ENCODE measurements at regions of chr3 and their contacts with region 1.

Region 1: DNA sequence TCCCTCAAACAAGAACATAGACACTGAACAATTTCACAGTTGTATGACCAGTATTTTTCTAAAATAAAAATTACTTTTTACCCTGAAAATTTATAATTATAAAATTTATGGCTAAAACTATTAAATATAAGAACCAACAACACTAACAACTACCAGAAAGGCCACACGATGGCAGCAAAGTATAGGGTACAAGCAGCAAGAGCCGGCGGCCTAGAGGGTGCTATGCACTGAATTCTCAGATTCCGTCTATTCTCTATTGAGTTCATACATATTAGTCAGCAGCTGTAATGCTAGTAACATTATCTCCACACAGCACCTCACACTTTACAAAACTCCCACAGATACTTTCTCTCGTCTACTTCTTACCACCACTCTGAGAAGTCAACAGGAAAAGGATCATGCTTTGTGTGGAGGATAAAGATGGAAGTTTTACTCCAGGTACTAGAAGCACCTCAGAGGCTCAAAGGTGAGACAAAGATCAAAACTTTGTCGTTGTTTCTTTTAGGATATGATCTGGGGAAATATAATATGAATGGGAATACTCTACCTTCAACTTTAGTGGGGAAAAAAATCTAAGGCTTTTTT is 160.5 kb downstream of the FGF12 start:
- DNase-seq: peak; percentile 86
- H3K4me3 Mint-ChIP-seq: no peak overlapping the region
- H3K27ac Mint-ChIP-seq: no peak overlapping the region
- H3K4me1 Mint-ChIP-seq: peaks cover 5% of the 10 kb centered on the region
- H3K27me3 Mint-ChIP-seq: peaks cover 22% of the 10 kb centered on the region

Region 2: DNA sequence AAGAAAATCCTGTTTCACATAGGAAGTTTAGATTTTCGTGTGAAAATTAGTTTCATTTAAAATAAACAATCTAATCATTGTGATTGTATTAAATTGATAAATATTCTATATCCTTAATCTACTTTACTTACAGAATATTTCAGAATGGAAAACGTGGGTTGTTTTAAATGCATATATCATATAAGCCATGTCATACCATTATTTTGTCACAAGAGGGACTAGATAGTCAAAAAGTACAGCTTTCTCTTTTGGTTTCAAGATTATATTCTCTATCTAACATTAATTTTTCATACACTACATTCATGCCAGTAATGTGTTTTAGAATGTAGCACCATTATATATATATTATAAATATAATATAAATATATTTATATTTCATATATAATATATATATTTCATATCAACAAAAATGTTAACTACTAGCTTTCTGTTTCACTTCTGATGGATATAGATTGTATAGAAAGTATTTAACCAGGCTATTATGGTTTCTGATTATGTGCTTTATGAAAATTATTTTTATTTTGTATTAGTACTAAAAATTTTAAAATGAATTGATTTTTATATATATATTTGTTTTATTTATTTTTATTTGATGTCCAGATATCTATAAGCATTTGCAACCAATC is 1322.4 kb before region 1 on chr3:
- intact Hi-C with region 1: loop called (anchors 5 kb)
- DNase-seq: no peak
- H3K4me3 Mint-ChIP-seq: no peak overlapping the region
- H3K27ac Mint-ChIP-seq: no peak overlapping the region
- H3K4me1 Mint-ChIP-seq: no peaks in the 10 kb centered on the region
- H3K27me3 Mint-ChIP-seq: no peaks in the 10 kb centered on the region

Region 3: GRCh38 chr3:192597533-192598302 is 30.9 kb after region 1 on chr3:
- intact Hi-C with region 1: no loop called
- DNase-seq: no peak
- H3K4me3 Mint-ChIP-seq: no peak overlapping the region
- H3K27ac Mint-ChIP-seq: no peak overlapping the region
- H3K4me1 Mint-ChIP-seq: no peaks in the 10 kb centered on the region
- H3K27me3 Mint-ChIP-seq: no peaks in the 10 kb centered on the region

Region 4: GRCh38 chr3:192802957-192803899 is 236.4 kb after region 1 on chr3:
- intact Hi-C with region 1: loop called (anchors 1 kb)
- DNase-seq: no peak
- H3K4me3 Mint-ChIP-seq: no peak overlapping the region
- H3K27ac Mint-ChIP-seq: no peak overlapping the region
- H3K4me1 Mint-ChIP-seq: peaks cover 6% of the 10 kb centered on the region
- H3K27me3 Mint-ChIP-seq: no peaks in the 10 kb centered on the region

Region 5: GRCh38 chr3:193040836-193041672 is 474.3 kb after region 1 on chr3:
- intact Hi-C with region 1: loop called (anchors 2 kb)
- DNase-seq: peak; percentile 64
- H3K4me3 Mint-ChIP-seq: no peak overlapping the region
- H3K27ac Mint-ChIP-seq: peak overlapping the region; percentile 26
- H3K4me1 Mint-ChIP-seq: peaks cover 8% of the 10 kb centered on the region
- H3K27me3 Mint-ChIP-seq: peaks cover 17% of the 10 kb centered on the region

Region 6: DNA sequence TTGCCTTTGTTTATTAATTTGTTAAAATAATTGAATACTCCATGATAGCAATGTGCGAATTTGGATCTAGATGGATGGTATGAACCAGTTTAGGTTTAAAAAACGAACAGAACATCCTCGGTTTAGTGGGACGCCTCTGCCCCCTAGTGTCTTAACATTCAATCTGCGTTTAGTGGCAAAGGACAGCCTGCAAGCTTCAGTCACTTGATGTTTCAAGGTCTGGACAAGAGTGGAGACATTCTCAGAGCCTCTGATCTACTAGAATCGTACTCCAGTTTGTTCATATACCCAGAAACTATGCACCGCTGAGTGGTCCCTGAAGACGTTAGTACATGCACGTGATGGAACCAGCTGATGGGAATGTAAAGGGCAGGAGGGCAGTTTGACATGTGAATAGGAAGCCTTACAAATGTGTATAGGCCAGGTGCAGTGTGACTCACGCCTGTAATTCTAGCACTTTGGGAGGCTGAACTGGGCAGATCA is 1005.7 kb after region 1 on chr3:
- intact Hi-C with region 1: loop called (anchors 5 kb)
- DNase-seq: peak; percentile 84
- H3K4me3 Mint-ChIP-seq: no peak overlapping the region
- H3K27ac Mint-ChIP-seq: no peak overlapping the region
- H3K4me1 Mint-ChIP-seq: no peaks in the 10 kb centered on the region
- H3K27me3 Mint-ChIP-seq: peaks cover 5% of the 10 kb centered on the region